ENCODE measurements at regions of chr16 and their contacts with region 1.

Region 1: DNA sequence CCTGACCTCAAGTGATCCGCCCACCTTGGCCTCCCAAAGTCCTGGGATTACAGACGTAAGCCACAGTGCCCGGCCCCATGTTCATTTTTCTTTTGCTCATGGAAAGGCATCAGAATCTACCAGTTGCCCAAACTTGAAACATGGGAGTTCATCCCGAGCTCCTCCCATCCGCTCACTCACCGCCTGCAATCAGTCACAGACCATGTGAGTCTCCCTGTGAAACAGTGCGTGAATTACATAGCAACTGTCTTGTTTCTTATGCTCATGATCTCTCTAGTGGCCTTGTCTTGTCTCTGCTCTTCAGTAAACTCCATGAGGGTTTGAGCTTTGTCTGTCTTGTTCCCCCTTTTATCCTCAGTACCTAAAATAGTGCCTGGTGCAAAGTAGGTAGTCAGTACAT is 52.1 kb upstream of the TNRC6A start:
- DNase-seq: no peak
- H3K4me3 ChIP-seq: no peak overlapping the region
- H3K27me3 ChIP-seq: no peaks in the 10 kb centered on the region
- CTCF ChIP-seq: no peak

Region 2: GRCh38 chr16:24700549-24701392 is 23.4 kb after region 1 on chr16:
- CTCF ChIA-PET with region 1: interaction called, 3 read pairs
- POLR2A ChIA-PET with region 1: interaction called, 11 read pairs
- DNase-seq: peak; percentile 97
- H3K4me3 ChIP-seq: no peak overlapping the region
- H3K27me3 ChIP-seq: no peaks in the 10 kb centered on the region
- CTCF ChIP-seq: peak; percentile 62